ENCODE measurements at regions of chr15 and their contacts with region 1.

Region 1: DNA sequence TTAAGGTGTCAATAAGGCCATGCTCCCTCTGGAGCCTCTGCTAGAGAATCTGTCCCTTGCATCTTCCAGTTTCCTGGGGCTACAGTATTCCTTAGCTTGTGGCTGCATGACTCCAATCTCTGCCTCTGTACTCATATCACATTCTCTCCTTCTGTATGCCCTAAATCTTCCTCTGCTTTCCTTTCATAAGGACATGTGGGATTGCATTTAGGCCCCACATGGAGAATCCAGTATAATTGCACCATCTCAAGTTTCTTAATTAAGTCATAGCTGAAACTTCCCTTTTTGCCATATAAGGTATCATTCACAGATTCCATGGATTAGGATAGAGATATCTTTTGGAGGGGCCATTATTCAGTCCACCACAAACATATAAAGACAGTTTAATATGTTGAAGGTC is 409.8 kb upstream of the TMCO5A start:
- DNase-seq: no peak
- ATAC-seq: no peak

Region 2: GRCh38 chr15:37503557-37503956 is 21.0 kb before region 1 on chr15:
- intact Hi-C with region 1: loop called in 1 of 2 experiments (anchors 2 kb)
- DNase-seq: no peak
- ATAC-seq: no peak

Region 3: DNA sequence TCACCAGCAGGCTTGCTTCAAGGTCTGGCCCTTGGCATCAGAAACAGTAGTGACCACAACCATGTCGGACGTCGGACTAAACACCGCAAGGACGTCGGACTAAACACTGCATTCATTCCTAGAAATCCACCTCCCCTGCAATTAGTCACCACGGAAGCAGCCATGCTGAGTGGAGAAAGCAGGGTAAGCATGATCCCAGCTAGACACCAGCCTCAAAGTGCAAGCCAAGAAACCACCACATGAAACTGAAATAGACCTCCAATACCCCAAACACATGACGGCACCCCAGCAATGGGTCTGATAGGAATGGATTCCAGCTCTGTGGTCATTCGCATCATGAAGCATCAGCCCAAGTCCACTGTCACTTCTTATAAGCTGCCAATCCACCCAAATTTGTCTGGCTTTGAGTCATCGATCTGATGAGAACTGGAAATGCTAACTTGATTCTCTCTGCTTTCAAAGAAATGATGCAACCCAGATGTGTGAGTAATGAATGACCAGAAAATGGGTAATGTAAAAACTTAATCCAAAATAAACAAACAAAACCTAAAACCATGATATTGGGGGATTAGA is 61.5 kb after region 1 on chr15:
- intact Hi-C with region 1: no loop called
- DNase-seq: no peak
- ATAC-seq: no peak

Region 4: GRCh38 chr15:37618353-37618752 is 93.8 kb after region 1 on chr15:
- intact Hi-C with region 1: no loop called
- DNase-seq: no peak
- ATAC-seq: no peak

Region 5: DNA sequence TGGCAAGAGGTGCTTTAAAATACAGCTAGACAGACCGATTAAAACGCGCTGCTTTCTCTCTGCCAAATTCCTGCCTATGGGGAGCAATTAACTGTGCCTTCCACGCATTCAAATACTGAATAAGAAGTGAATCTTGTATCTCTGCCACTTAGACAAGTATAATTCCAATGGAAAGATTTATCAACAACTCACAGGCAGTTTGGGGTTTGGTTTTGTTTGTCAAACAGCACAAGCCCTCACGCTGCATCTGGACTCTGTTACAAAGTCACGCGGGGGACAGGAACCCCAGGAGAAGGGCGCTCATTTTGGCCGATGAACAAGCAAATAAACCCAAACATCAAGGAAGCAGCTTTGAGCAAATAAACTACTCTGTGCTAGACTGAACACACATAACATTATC is 348.1 kb after region 1 on chr15:
- intact Hi-C with region 1: no loop called
- DNase-seq: no peak
- ATAC-seq: no peak